Ovary (tissue), 10 donors: ENCODE measurements at regions of chr7 and their contacts with region 1.

Region 1: DNA sequence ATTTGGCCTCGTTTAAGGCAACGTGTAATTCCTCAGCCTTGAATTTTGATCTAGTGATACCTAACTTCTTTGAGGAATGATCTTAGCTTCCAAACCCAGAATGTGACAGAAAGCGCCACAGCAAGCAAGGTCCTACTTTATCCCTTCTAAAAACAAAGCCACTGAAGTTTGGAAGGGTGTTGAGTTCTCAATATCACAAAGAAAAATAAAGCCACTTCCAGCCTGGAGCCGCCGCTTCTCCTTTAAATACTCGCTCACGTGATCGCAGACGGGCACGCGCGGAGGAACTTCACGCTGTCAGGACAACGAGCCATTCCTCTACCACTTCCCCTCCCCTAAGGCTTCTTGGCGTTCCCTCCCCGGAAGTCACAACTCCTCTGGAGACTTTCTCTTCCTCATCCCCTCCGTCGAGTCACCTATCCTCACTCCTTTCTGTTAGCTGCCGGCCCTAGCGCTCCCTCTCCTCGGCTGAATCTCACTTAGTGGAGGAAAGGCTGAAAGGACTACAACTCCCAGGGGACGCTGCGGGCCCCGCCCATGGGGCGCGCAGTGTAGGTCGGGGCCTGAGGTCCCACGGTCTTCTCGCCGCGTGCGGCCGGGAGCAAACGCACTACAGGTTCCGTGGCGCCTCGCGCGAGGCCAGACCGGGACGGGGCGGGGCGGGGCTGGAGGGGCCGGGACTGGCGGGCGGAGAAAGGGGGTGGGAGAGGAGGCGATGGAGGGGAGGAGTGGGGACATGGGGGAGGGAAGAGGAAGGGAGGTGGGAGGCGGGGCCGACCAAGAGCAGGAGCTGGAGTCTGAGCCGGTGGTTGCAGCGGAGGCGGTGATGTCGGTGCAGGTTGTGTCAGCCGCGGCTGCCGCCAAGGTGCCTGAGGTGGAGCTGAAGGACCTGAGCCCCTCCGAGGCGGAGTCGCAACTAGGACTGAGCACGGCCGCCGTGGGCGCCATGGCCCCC is at the start of gene AHCYL2:
- DNase-seq: peak; percentile 97 to 99 (median 97)
- H3K4me3 ChIP-seq: peak within 1 kb of the TSS; percentile 63
- H3K27ac ChIP-seq: peak within 1 kb of the TSS; percentile 77 to 88
- H3K4me1 ChIP-seq: peaks cover 4% of the 10 kb centered on the region
- H3K27me3 ChIP-seq: no peaks in the 10 kb centered on the region
- CTCF ChIP-seq: no peak
- EP300 ChIP-seq: no peak
- POLR2A ChIP-seq: peak; percentile 8
- total RNA-seq, gene AHCYL2: 12.6 to 25.8 (median 17.2) TPM

Region 2: GRCh38 chr7:129298268-129298893 is 73.9 kb after region 1 on chr7:
- intact Hi-C with region 1: loop called in 3 of 4 experiments (anchors 5 to 10 kb)
- DNase-seq: peak; percentile 24 to 61 (median 53)
- H3K4me3 ChIP-seq: no peak overlapping the region
- H3K27ac ChIP-seq: no peak overlapping the region
- H3K4me1 ChIP-seq: no peaks in the 10 kb centered on the region
- H3K27me3 ChIP-seq: no peaks in the 10 kb centered on the region
- CTCF ChIP-seq: peak; percentile 35 to 48 (median 39)
- EP300 ChIP-seq: no peak
- POLR2A ChIP-seq: no peak

Region 3: GRCh38 chr7:129376076-129376777 is 151.7 kb after region 1 on chr7:
- intact Hi-C with region 1: no loop called
- DNase-seq: no peak
- H3K4me3 ChIP-seq: no peak overlapping the region
- H3K27ac ChIP-seq: no peak overlapping the region
- H3K4me1 ChIP-seq: no peaks in the 10 kb centered on the region
- H3K27me3 ChIP-seq: no peaks in the 10 kb centered on the region
- CTCF ChIP-seq: no peak
- EP300 ChIP-seq: no peak
- POLR2A ChIP-seq: no peak